WTC11 (cell line): ENCODE measurements at regions of chr7 and their contacts with region 1.

Region 1: GRCh38 chr7:29921404-29922010 is 68.1 kb downstream of the SCRN1 start:
- DNase-seq: peak; percentile 63
- ATAC-seq: peak; percentile 94
- H3K4me3 Mint-ChIP-seq: no peak overlapping the region
- H3K27ac Mint-ChIP-seq: no peak overlapping the region
- H3K4me1 Mint-ChIP-seq: no peaks in the 10 kb centered on the region
- H3K27me3 Mint-ChIP-seq: no peaks in the 10 kb centered on the region
- CTCF ChIP-seq: peak; percentile 85; the same call in 1 of the 2 replicates

Region 2: DNA sequence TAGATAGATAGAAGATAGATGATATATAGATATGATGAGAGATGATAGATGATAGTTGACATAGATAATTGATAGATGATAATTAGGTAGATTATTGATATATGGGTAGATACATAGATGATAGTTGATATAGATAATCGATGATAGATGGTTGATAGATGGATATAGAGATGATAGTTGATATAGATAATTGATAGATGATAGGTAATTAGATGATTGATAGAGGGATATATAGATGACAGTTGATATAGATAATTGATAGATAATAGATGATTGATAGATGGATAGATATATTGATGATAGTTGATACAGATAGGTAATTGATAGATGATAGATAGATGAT is 285.5 kb before region 1 on chr7:
- CTCF ChIA-PET with region 1: interaction called, 11 read pairs
- POLR2A ChIA-PET with region 1: no interaction called
- DNase-seq: no peak
- ATAC-seq: no peak
- H3K4me3 Mint-ChIP-seq: no peak overlapping the region
- H3K27ac Mint-ChIP-seq: no peak overlapping the region
- H3K4me1 Mint-ChIP-seq: peaks cover 10% of the 10 kb centered on the region
- H3K27me3 Mint-ChIP-seq: no peaks in the 10 kb centered on the region
- CTCF ChIP-seq: no peak

Region 3: GRCh38 chr7:29748286-29749108 is 173.0 kb before region 1 on chr7:
- CTCF ChIA-PET with region 1: interaction called, 32 read pairs
- POLR2A ChIA-PET with region 1: no interaction called
- DNase-seq: no peak
- ATAC-seq: peak; percentile 74
- H3K4me3 Mint-ChIP-seq: no peak overlapping the region
- H3K27ac Mint-ChIP-seq: no peak overlapping the region
- H3K4me1 Mint-ChIP-seq: no peaks in the 10 kb centered on the region
- H3K27me3 Mint-ChIP-seq: no peaks in the 10 kb centered on the region
- CTCF ChIP-seq: peak; percentile 16; the same call in 1 of the 2 replicates

Region 4: GRCh38 chr7:29793507-29793906 is 128.0 kb before region 1 on chr7:
- CTCF ChIA-PET with region 1: interaction called, 10 read pairs
- POLR2A ChIA-PET with region 1: no interaction called
- DNase-seq: no peak
- ATAC-seq: peak; percentile 99
- H3K4me3 Mint-ChIP-seq: no peak overlapping the region; the same call in 1 of the 2 replicates
- H3K27ac Mint-ChIP-seq: no peak overlapping the region
- H3K4me1 Mint-ChIP-seq: peaks cover 26% of the 10 kb centered on the region
- H3K27me3 Mint-ChIP-seq: no peaks in the 10 kb centered on the region; the same call in 1 of the 2 replicates
- CTCF ChIP-seq: no peak

Region 5: GRCh38 chr7:29881724-29882123 is 39.8 kb before region 1 on chr7:
- CTCF ChIA-PET with region 1: interaction called, 11 read pairs
- POLR2A ChIA-PET with region 1: interaction called, 3 read pairs
- DNase-seq: peak; percentile 59
- ATAC-seq: peak; percentile 73
- H3K4me3 Mint-ChIP-seq: no peak overlapping the region
- H3K27ac Mint-ChIP-seq: no peak overlapping the region
- H3K4me1 Mint-ChIP-seq: peaks cover 31% of the 10 kb centered on the region
- H3K27me3 Mint-ChIP-seq: no peaks in the 10 kb centered on the region; the same call in 1 of the 2 replicates
- CTCF ChIP-seq: no peak

Region 6: DNA sequence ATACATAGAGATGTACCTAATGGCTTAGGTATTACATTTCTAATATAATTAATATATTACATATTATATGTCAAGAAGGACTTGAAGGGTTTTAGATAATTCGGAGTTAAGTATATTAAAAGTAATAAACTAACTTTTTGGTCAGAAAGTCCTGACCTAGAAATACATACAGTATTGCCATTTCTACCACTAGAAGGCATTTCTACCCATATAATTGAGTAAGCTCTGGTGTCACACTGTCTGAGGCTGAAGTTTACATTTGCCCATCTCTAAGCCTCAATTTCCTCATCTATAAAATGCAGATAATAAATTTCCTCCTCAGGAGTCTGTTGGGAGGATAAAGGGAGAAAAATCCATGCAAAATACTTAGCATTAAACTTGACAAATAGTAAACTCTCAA is 97.9 kb after region 1 on chr7:
- CTCF ChIA-PET with region 1: no interaction called
- POLR2A ChIA-PET with region 1: no interaction called
- DNase-seq: no peak
- ATAC-seq: no peak
- H3K4me3 Mint-ChIP-seq: no peak overlapping the region
- H3K27ac Mint-ChIP-seq: no peak overlapping the region
- H3K4me1 Mint-ChIP-seq: peaks cover 11% of the 10 kb centered on the region
- H3K27me3 Mint-ChIP-seq: no peaks in the 10 kb centered on the region
- CTCF ChIP-seq: no peak